ENCODE measurements at regions of chr6 and their contacts with region 1.

Region 1: DNA sequence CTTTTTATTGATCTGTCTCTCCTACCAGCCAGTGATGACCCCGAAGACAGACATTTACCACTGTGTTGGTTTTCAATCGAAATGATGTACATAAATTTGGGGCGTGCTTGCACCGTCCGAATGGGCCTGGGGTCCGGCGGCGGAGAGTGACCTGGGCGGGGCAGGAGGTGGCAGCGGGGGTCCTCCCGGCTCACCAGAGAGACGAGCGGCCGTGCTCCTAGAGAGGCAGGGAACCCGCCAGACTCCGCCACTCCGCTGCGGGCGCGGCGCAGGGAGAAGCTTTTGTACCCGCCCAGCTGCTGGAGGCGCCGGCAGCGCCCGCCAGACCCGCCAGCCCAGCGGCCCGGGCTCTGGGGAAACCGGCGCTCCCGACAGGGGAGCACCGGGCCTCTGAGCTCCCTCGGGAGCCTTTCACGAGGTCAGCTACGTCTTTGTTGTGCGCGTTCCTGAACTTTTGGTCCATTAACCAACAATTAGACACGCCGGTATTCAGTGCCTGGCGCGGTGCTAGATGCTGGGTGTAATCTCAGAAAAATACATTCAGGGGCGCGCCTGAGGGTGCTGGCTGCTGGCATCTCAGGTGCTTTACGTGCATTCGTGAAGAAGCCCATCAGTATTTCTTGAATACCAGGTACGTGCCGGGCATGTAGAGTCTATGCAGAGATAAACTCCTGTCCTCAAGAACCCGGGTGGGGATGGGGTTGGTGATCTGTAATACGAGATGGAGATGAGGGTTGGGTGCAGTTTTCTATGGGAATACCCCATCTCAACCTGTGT is at the start of gene PGBD1:
- DNase-seq: peak; percentile 81 to 84
- H3K4me3 ChIP-seq: peak within 1 kb of the TSS; percentile 74
- H3K4me3 Mint-ChIP-seq: peak within 1 kb of the TSS; percentile 85
- H3K27ac Mint-ChIP-seq: no peak within 1 kb of the TSS
- H3K4me1 ChIP-seq: 0 out of 2 replicates have a peak, but pooled peaks cover 4% of the 10 kb centered on the region
- H3K4me1 Mint-ChIP-seq: peaks cover 10% of the 10 kb centered on the region
- H3K27me3 ChIP-seq: no peaks in the 10 kb centered on the region
- H3K27me3 Mint-ChIP-seq: no peaks in the 10 kb centered on the region
- CTCF ChIP-seq: no peak
- total RNA-seq, gene PGBD1: 3.6 and 3.8 TPM in 2 replicates

Region 2: DNA sequence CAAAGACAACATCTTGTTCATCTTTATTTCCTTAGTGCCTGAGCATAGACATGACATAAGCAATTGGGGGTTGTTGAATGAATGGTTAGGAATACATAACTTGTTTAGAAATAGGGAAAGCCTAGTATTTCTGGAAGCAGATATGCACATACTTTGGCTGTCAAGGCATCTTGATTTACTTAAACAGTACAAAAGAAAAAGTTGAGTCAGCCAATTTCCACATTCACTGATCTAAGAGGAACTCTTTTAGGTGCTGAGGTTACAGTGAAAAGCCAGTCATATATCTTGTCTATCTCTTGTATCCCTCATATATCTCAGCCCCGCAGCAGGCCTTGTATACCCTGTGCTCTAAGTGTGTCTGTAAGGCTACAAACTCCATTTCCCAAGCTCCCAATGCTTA is 41.0 kb before region 1 on chr6:
- CTCF ChIA-PET with region 1: no interaction called
- POLR2A ChIA-PET with region 1: no interaction called
- intact Hi-C with region 1: no loop called
- DNase-seq: no peak
- H3K4me3 ChIP-seq: no peak overlapping the region
- H3K4me3 Mint-ChIP-seq: no peak overlapping the region
- H3K27ac Mint-ChIP-seq: no peak overlapping the region
- H3K4me1 ChIP-seq: no peaks in the 10 kb centered on the region
- H3K4me1 Mint-ChIP-seq: no peaks in the 10 kb centered on the region
- H3K27me3 ChIP-seq: no peaks in the 10 kb centered on the region
- H3K27me3 Mint-ChIP-seq: no peaks in the 10 kb centered on the region
- CTCF ChIP-seq: no peak

Region 3: GRCh38 chr6:28349892-28350737 is 68.6 kb after region 1 on chr6 and contains the start of gene ZKSCAN3:
- CTCF ChIA-PET with region 1: interaction called, 14 read pairs
- POLR2A ChIA-PET with region 1: no interaction called
- intact Hi-C with region 1: loop called (anchors 1 kb)
- DNase-seq: peak; percentile 76 to 77
- H3K4me3 ChIP-seq: peak within 1 kb of the TSS; percentile 48
- H3K4me3 Mint-ChIP-seq: peak within 1 kb of the TSS; percentile 96
- H3K27ac Mint-ChIP-seq: peak within 1 kb of the TSS; percentile 94
- H3K4me1 ChIP-seq: 0 out of 2 replicates have a peak, but pooled peaks cover 7% of the 10 kb centered on the region
- H3K4me1 Mint-ChIP-seq: peaks cover 11% of the 10 kb centered on the region
- H3K27me3 ChIP-seq: no peaks in the 10 kb centered on the region
- H3K27me3 Mint-ChIP-seq: peaks cover 3% of the 10 kb centered on the region
- CTCF ChIP-seq: no peak
- total RNA-seq, gene ZKSCAN3: 3.7 and 4.3 TPM in 2 replicates